Activated CD8-positive, alpha-beta T cell treated with anti-CD3 and anti-CD28 coated beads for 36 hours (primary cell): ENCODE measurements at regions of chrX and their contacts with region 1.

Region 1: DNA sequence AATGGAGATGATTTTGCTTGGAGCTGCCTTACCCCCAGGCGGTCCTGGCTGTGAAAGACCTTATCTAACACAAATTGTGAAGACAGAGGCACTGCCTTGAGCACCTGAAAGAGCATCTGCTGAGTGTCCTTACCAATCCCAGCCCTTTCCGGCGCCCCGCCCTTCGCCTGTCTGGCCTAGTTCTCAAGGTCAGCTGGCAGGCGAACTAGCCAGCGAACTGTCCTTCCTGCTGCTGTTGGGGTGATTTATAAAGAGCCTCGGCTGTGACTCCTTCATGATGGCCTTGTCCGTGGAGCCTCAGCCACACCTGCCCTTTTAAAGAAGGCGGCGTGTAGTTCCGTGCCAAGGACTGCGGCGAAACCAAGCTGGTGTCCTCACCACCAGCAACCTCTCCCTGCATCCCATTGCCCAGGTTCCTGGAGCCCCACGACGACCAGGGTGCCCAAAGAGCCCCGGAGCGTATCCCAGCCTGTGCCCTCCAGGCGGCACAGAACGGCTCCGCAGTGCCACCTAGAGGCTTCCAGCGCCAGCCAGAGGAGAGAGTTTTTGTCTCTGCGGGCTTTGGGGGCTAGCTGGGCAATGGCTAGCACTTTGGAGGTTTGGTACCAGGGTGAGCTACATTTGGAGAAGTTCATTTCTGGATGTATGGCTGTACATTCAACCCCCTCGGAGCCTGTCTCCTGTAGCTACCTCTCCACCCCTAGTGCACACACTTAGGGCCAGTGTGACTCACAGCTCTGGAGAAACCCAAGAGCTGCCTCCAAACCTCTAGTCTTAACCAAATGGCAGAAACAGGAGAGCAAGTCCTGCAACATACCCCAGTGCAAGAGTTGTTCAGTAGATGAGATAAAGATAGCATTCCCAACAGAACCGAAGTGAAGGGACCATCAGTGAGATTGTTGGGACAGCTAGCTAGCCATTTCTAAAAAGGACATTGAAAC is 36.8 kb upstream of the VMA21 start:
- DNase-seq: peak; percentile 49
- ATAC-seq: peak; percentile 68
- H3K4me3 Mint-ChIP-seq: peak overlapping the region; percentile 31
- H3K27ac Mint-ChIP-seq: no peak overlapping the region
- H3K4me1 Mint-ChIP-seq: no peaks in the 10 kb centered on the region
- H3K27me3 Mint-ChIP-seq: peaks cover 13% of the 10 kb centered on the region
- CTCF ChIP-seq: peak; percentile 62

Region 2: GRCh38 chrX:151042842-151043241 is 317.4 kb before region 1 on chrX:
- CTCF ChIA-PET with region 1: no interaction called
- POLR2A ChIA-PET with region 1: no interaction called
- intact Hi-C with region 1: no loop called
- DNase-seq: no peak
- ATAC-seq: no peak
- H3K4me3 Mint-ChIP-seq: no peak overlapping the region
- H3K27ac Mint-ChIP-seq: no peak overlapping the region
- H3K4me1 Mint-ChIP-seq: no peaks in the 10 kb centered on the region
- H3K27me3 Mint-ChIP-seq: no peaks in the 10 kb centered on the region
- CTCF ChIP-seq: no peak

Region 3: GRCh38 chrX:151151665-151152267 is 208.4 kb before region 1 on chrX:
- CTCF ChIA-PET with region 1: interaction called, 8 read pairs
- POLR2A ChIA-PET with region 1: no interaction called
- intact Hi-C with region 1: loop called (anchors 5 kb)
- DNase-seq: peak; percentile 29
- ATAC-seq: peak; percentile 45
- H3K4me3 Mint-ChIP-seq: no peak overlapping the region
- H3K27ac Mint-ChIP-seq: no peak overlapping the region
- H3K4me1 Mint-ChIP-seq: no peaks in the 10 kb centered on the region
- H3K27me3 Mint-ChIP-seq: peaks cover 12% of the 10 kb centered on the region
- CTCF ChIP-seq: peak; percentile 58

Region 4: GRCh38 chrX:151239756-151240155 is 120.4 kb before region 1 on chrX:
- CTCF ChIA-PET with region 1: no interaction called
- POLR2A ChIA-PET with region 1: no interaction called
- intact Hi-C with region 1: no loop called
- DNase-seq: no peak
- ATAC-seq: no peak
- H3K4me3 Mint-ChIP-seq: no peak overlapping the region
- H3K27ac Mint-ChIP-seq: no peak overlapping the region
- H3K4me1 Mint-ChIP-seq: no peaks in the 10 kb centered on the region
- H3K27me3 Mint-ChIP-seq: no peaks in the 10 kb centered on the region
- CTCF ChIP-seq: no peak

Region 5: GRCh38 chrX:151523351-151523750 is 163.2 kb after region 1 on chrX:
- CTCF ChIA-PET with region 1: no interaction called
- POLR2A ChIA-PET with region 1: no interaction called
- intact Hi-C with region 1: no loop called
- DNase-seq: no peak
- ATAC-seq: no peak
- H3K4me3 Mint-ChIP-seq: no peak overlapping the region
- H3K27ac Mint-ChIP-seq: no peak overlapping the region
- H3K4me1 Mint-ChIP-seq: no peaks in the 10 kb centered on the region
- H3K27me3 Mint-ChIP-seq: peaks cover 4% of the 10 kb centered on the region
- CTCF ChIP-seq: no peak